Ascending aorta (tissue), 2 donors: ENCODE measurements at regions of chr22 and their contacts with region 1.

Region 1: GRCh38 chr22:33726294-33726734 is 194.0 kb downstream of the LARGE1 start:
- DNase-seq: no peak
- H3K4me3 ChIP-seq: no peak overlapping the region
- H3K27ac ChIP-seq: peak overlapping the region; percentile 14 to 34
- H3K4me1 ChIP-seq: peaks cover 0 to 15% of the 10 kb centered on the region in 2 donors
- H3K27me3 ChIP-seq: no peaks in the 10 kb centered on the region
- CTCF ChIP-seq: no peak

Region 2: GRCh38 chr22:33841281-33842005 is 115.1 kb after region 1 on chr22:
- intact Hi-C with region 1: loop called (anchors 10 kb)
- DNase-seq: no peak
- H3K4me3 ChIP-seq: peak overlapping the region in 1 of 2 donors; percentile 28
- H3K27ac ChIP-seq: peak overlapping the region; percentile 49 to 66
- H3K4me1 ChIP-seq: peaks cover 3 to 18% of the 10 kb centered on the region in 2 donors
- H3K27me3 ChIP-seq: no peaks in the 10 kb centered on the region
- CTCF ChIP-seq: no peak